Esophagus muscularis mucosa (tissue), 4 donors: ENCODE measurements at regions of chr12 and their contacts with region 1.

Region 1: DNA sequence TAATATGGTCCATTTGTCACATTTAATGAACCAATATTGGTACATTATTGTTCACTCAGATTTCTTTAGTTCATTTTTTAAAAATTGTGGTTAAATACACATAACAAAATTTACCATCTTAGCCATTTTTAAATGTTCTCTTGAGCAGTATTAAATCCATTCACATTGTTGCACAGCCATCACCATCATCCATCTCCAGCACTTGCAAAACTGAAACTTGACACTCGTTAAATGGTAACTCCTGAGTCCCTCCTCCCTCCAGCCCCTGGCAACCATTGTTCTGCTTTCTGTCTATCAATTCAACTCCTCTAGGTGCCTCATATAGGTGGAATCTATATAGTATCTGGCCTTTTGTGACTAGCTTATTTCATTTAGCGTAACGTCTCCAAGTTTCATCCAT is 86.4 kb downstream of the ACACB start:
- DNase-seq: no peak
- H3K4me3 ChIP-seq: no peak overlapping the region
- H3K27ac ChIP-seq: no peak overlapping the region
- H3K4me1 ChIP-seq: no peaks in the 10 kb centered on the region
- H3K27me3 ChIP-seq: no peaks in the 10 kb centered on the region
- CTCF ChIP-seq: no peak
- EP300 ChIP-seq: no peak
- POLR2A ChIP-seq: no peak

Region 2: DNA sequence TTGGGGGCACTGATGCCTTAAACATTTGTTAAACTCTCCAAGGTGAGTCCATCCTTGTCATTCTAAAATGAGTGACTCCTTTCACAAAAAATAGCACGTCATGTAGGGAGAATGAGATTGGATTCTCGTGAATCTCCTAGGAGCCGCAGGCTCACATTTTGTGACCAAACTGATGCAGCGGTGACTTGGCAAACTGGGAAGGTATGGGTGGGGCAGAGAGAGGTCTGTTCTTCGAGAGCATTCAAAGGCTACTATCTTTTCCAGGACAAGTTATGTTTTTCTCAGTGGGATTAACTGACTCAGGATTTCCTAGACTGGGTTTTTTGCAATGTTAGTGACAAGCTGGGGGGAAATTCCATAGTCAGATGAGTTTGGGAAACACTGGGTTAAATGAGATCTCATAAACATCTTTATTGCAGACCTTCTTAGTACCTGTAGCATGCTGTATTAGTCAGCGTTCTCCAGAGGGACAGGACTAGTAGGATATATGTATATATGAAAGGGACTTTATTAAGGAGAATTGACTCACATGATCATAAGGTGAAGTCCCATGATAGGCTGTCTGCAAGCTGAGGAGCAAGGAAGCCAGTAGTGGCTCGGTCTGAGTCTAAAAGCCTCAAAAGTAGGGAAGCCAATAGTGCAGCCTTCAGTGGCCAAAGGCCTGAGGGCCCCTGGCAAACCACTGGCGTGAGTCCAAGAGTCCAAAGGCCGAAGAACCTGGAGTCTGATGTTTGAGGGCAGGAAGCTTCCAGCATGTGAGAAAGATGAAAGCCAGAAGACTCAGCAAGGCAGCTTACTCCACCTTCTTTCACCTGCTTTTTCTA is 45.3 kb after region 1 on chr12:
- intact Hi-C with region 1: loop called (anchors 5 kb)
- DNase-seq: no peak
- H3K4me3 ChIP-seq: no peak overlapping the region
- H3K27ac ChIP-seq: no peak overlapping the region
- H3K4me1 ChIP-seq: peaks cover 0 to 8% (median 0%) of the 10 kb centered on the region in 4 donors
- H3K27me3 ChIP-seq: no peaks in the 10 kb centered on the region
- CTCF ChIP-seq: no peak
- EP300 ChIP-seq: no peak
- POLR2A ChIP-seq: no peak